T-cell (primary cell): ENCODE measurements at regions of chr17 and their contacts with region 1.

Region 1: DNA sequence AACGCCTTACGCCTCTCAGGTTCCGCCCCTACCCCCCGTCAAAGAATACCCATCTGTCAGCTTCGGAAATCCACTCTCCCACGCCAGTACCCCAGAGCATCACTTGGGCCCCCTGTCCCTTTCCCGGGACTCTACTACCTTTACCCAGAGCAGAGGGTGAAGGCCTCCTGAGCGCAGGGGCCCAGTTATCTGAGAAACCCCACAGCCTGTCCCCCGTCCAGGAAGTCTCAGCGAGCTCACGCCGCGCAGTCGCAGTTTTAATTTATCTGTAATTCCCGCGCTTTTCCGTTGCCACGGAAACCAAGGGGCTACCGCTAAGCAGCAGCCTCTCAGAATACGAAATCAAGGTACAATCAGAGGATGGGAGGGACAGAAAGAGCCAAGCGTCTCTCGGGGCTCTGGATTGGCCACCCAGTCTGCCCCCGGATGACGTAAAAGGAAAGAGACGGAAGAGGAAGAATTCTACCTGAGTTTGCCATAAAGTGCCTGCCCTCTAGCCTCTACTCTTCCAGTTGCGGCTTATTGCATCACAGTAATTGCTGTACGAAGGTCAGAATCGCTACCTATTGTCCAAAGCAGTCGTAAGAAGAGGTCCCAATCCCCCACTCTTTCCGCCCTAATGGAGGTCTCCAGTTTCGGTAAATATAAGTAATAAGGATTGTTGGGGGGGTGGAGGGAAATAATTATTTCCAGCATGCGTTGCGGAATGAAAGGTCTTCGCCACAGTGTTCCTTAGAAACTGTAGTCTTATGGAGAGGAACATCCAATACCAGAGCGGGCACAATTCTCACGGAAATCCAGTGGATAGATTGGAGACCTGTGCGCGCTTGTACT is at the start of gene BRCA1:
- DNase-seq: peak; percentile 82 to 98 (median 93)
- ATAC-seq: peak; percentile 100
- H3K4me3 ChIP-seq: peak within 1 kb of the TSS; percentile 68 to 72
- H3K4me3 Mint-ChIP-seq: peak within 1 kb of the TSS; percentile 84 to 96 (median 96)
- H3K27ac ChIP-seq: peak within 1 kb of the TSS; percentile 62
- H3K27ac Mint-ChIP-seq: peak within 1 kb of the TSS; percentile 82 to 87
- H3K4me1 ChIP-seq: peaks cover 9 to 24% of the 10 kb centered on the region in 2 experiments
- H3K4me1 Mint-ChIP-seq: peaks cover 20 to 37% (median 31%) of the 10 kb centered on the region in 3 donors
- H3K27me3 ChIP-seq: no peaks in the 10 kb centered on the region
- H3K27me3 Mint-ChIP-seq: no peaks in the 10 kb centered on the region
- total RNA-seq, gene BRCA1: 2.8 to 5.5 (median 4.2) TPM

Region 2: GRCh38 chr17:43338886-43339516 is 213.7 kb after region 1 on chr17:
- CTCF ChIA-PET with region 1: interaction called in 1 of 2 experiments, 11 read pairs
- POLR2A ChIA-PET with region 1: no interaction called
- DNase-seq: peak in 34 of 35 experiments; percentile 18 to 66 (median 54)
- ATAC-seq: peak in 1 of 4 experiments; percentile 44
- H3K4me3 ChIP-seq: no peak overlapping the region
- H3K4me3 Mint-ChIP-seq: no peak overlapping the region
- H3K27ac ChIP-seq: no peak overlapping the region
- H3K27ac Mint-ChIP-seq: no peak overlapping the region
- H3K4me1 ChIP-seq: peaks cover 0 to 11% of the 10 kb centered on the region in 2 experiments
- H3K4me1 Mint-ChIP-seq: peaks cover 3 to 14% (median 5%) of the 10 kb centered on the region in 3 donors
- H3K27me3 ChIP-seq: no peaks in the 10 kb centered on the region
- H3K27me3 Mint-ChIP-seq: peaks cover 0 to 3% of the 10 kb centered on the region in 2 donors